Right ventricle myocardium inferior (tissue), 1 donor: ENCODE measurements at regions of chr12 and their contacts with region 1.

Region 1: GRCh38 chr12:121568971-121569751 is 11.7 kb downstream of the KDM2B start:
- DNase-seq: peak; percentile 71
- ATAC-seq: peak; percentile 93

Region 2: GRCh38 chr12:120562906-120563305 is 1006.3 kb before region 1 on chr12:
- intact Hi-C with region 1: loop called (anchors 10 kb)
- DNase-seq: no peak
- ATAC-seq: peak; percentile 87

Region 3: DNA sequence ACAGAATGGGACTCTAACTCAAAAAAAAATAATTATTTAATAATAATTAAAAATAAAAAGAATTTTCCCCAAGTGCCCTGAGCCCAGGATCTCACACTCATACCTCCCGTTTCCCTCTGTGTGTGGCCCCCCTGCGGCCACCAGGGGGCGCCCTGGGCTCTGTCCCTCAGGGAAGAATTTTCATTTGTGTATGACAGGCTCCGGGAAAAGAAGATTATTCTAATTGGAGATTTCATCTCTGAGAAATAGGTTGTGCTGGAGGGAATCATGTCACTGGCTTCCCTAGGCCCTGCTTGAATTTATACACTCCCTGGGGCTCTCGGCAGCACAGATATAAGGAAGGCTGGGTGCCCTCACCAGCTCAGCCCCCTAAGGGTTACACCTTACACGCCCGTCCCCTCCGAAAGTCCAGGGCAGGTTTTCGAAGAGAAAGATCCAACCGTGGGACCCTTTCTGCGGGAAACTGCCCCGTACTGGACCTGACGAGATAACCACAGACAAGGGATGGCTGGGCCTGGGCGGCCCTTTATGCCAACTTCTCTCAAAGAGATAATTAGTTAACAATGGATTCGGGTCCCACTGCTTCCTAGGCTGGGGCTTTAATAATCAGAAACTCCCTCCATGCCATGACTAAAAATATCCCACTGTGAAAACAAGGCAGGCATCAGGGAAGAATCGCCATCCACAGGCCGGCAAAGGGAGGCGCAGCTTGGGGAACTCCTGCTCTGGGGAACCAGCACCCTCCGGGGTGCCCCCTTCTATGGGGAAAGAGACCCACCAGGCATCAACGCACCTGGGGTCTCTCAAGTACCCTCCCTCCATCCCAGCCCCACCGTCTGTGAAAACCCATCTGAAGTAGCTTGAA is 69.0 kb before region 1 on chr12:
- intact Hi-C with region 1: no loop called
- DNase-seq: peak; percentile 86
- ATAC-seq: peak; percentile 87